CD4-positive, alpha-beta memory T cell (primary cell): ENCODE measurements at regions of chr12 and their contacts with region 1.

Region 1: DNA sequence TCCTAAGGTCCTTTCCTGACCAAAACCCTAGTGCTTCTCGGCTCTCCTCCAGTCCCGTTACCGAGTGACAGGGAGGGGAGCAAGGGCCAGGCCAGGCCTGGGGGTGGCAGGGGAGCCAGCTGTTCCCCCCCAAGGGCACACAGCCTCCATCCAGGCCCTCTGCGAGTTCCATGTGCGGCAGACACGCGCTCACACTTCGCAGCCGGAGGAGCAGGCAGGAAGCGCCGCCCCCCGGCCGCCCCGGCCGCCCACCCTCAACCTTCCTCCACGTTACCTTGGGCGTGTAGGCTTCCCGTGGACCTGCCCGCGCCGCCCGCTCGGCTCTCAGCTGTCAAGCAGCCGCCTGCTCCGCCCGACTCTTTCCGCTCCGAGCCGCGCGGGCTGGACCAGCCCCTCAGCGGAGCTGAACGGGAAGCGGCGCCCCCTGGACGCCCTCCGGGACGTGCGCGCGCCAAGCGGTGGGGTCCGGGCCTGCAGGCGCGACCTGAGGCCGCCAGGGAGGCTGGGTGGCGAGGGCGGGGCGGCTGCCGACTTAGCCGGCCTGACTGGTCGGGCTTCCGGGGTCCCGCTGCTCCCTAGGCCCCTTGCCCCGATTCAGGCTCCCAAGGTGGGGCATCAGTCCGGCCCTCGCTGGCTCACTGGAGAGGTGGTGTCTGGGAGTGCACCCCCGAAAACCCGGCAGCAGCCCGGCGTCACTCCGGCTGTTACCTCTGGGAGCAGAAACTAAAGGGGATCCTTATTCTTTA is at the start of gene CRACR2A:
- DNase-seq: peak; percentile 79 to 85 (median 83)
- H3K4me3 ChIP-seq: peak within 1 kb of the TSS; percentile 82 to 89
- H3K4me3 Mint-ChIP-seq: peak within 1 kb of the TSS; percentile 87 to 95 (median 92)
- H3K27ac ChIP-seq: peak within 1 kb of the TSS; percentile 89
- H3K27ac Mint-ChIP-seq: peak within 1 kb of the TSS; percentile 94 to 99 (median 98)
- H3K4me1 ChIP-seq: peaks cover 61% of the 10 kb centered on the region
- H3K4me1 Mint-ChIP-seq: peaks cover 56 to 66% (median 60%) of the 10 kb centered on the region in 4 donors
- H3K27me3 ChIP-seq: no peaks in the 10 kb centered on the region
- H3K27me3 Mint-ChIP-seq: no peaks in the 10 kb centered on the region
- total RNA-seq, gene CRACR2A: 34.4 to 37.6 TPM

Region 2: GRCh38 chr12:3030821-3031429 is 722.0 kb before region 1 on chr12:
- CTCF ChIA-PET with region 1: no interaction called
- POLR2A ChIA-PET with region 1: no interaction called
- intact Hi-C with region 1: no loop called
- DNase-seq: no peak
- H3K4me3 ChIP-seq: no peak overlapping the region
- H3K4me3 Mint-ChIP-seq: no peak overlapping the region
- H3K27ac ChIP-seq: no peak overlapping the region
- H3K27ac Mint-ChIP-seq: no peak overlapping the region
- H3K4me1 ChIP-seq: no peaks in the 10 kb centered on the region
- H3K4me1 Mint-ChIP-seq: no peaks in the 10 kb centered on the region
- H3K27me3 ChIP-seq: no peaks in the 10 kb centered on the region
- H3K27me3 Mint-ChIP-seq: peaks cover 3% of the 10 kb centered on the region in 2 donors

Region 3: DNA sequence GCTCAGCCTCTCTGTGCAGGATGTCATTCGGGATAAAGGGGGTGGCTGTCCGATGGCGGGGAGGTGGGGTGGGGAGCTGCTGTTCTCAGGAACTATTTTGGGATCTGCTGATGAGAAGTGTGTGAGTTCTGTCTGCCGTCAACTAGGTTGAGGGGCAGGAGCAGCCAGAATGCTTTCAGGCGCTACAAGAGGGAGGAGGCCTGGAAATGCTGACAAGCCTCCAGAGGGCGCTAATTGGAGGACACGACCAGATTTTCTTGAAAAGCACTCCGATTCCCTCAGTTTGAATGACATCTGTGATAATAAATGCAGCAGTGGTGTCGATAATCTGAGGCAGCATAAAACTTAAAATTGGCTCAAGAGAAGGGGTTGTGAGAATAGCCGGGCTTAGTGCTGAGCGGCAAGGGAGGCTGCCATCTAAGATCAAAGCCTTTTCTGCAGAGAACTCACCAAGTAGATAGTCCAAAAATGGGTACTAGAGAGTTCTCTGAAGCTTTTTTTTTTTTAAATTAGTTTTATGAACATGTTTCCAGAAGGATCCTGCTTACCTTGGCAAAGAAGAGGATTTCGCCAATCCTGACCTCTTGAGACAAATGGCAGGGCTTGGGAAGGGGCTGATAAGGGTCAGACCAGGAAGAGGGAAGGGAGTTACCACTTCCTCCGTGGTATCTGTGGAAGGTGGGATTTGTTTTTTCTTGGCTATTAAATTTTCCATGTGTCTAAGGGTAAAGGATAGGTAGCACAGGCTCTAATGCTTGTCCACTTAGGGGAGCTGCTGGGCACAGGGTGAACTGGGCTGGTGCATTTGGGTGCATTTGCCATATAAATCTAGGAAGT is 94.4 kb before region 1 on chr12:
- CTCF ChIA-PET with region 1: interaction called, 7 read pairs
- POLR2A ChIA-PET with region 1: interaction called, 3 read pairs
- intact Hi-C with region 1: loop called (anchors 2 kb)
- DNase-seq: peak in 4 of 5 donors; percentile 22 to 38 (median 27)
- H3K4me3 ChIP-seq: no peak overlapping the region
- H3K4me3 Mint-ChIP-seq: no peak overlapping the region
- H3K27ac ChIP-seq: no peak overlapping the region
- H3K27ac Mint-ChIP-seq: peak overlapping the region in 1 of 7 donors; percentile 36
- H3K4me1 ChIP-seq: no peaks in the 10 kb centered on the region
- H3K4me1 Mint-ChIP-seq: no peaks in the 10 kb centered on the region
- H3K27me3 ChIP-seq: no peaks in the 10 kb centered on the region
- H3K27me3 Mint-ChIP-seq: no peaks in the 10 kb centered on the region

Region 4: GRCh38 chr12:3677609-3678008 is 75.3 kb before region 1 on chr12:
- CTCF ChIA-PET with region 1: no interaction called
- POLR2A ChIA-PET with region 1: no interaction called
- intact Hi-C with region 1: loop called (anchors 5 kb)
- DNase-seq: no peak
- H3K4me3 ChIP-seq: no peak overlapping the region
- H3K4me3 Mint-ChIP-seq: no peak overlapping the region
- H3K27ac ChIP-seq: no peak overlapping the region
- H3K27ac Mint-ChIP-seq: peak overlapping the region in 2 of 7 donors; percentile 4 to 75
- H3K4me1 ChIP-seq: no peaks in the 10 kb centered on the region
- H3K4me1 Mint-ChIP-seq: peaks cover 0 to 5% (median 0%) of the 10 kb centered on the region in 4 donors
- H3K27me3 ChIP-seq: no peaks in the 10 kb centered on the region
- H3K27me3 Mint-ChIP-seq: no peaks in the 10 kb centered on the region

Region 5: DNA sequence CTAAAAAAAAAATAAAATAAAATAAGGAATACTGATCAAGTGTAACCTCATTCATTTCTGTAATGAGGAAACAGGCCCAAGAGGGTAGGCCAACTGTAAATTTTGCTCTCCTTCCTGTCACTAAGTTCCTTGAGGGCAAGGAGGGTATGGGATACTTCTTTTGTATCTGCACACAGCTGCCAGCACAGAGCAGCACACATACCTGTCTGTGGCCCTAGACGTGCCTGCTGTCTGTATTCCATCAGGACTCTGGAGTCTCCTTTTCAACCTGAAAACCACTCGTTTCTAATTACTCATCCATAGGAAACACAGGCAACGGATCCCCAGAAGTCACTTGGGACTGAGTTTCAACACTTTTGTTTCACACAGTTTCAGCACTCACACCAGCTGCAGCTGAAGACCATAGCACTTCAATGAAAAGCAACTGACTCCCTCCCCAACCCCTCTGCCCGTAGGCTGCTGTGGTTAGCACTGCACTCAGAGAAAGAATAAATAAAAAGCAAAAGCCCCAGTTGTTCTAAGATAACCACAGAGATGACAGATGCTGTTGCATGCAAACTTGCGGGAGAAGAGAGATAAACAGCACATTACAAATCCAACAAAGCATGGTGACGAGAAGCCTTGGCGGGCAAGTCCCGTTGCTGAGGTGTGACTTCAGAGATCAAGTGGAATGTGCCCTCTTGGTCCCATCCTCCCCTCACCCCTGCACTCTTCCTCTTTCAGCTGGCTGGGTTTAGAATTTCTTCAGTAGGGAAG is 24.9 kb before region 1 on chr12:
- CTCF ChIA-PET with region 1: interaction called, 3 read pairs
- POLR2A ChIA-PET with region 1: interaction called, 5 read pairs
- intact Hi-C with region 1: loop called (anchors 2 kb)
- DNase-seq: peak; percentile 45 to 82 (median 64)
- H3K4me3 ChIP-seq: no peak overlapping the region
- H3K4me3 Mint-ChIP-seq: peak overlapping the region in 6 of 8 donors; percentile 22 to 70 (median 56)
- H3K27ac ChIP-seq: peak overlapping the region; percentile 43
- H3K27ac Mint-ChIP-seq: peak overlapping the region; percentile 83 to 94 (median 90)
- H3K4me1 ChIP-seq: peaks cover 30% of the 10 kb centered on the region
- H3K4me1 Mint-ChIP-seq: peaks cover 30 to 52% (median 44%) of the 10 kb centered on the region in 4 donors
- H3K27me3 ChIP-seq: no peaks in the 10 kb centered on the region
- H3K27me3 Mint-ChIP-seq: no peaks in the 10 kb centered on the region

Region 6: GRCh38 chr12:3872800-3873636 is 120.1 kb after region 1 on chr12 and contains the start of gene PARP11:
- CTCF ChIA-PET with region 1: no interaction called
- POLR2A ChIA-PET with region 1: interaction called, 5 read pairs
- intact Hi-C with region 1: loop called (anchors 2 kb)
- DNase-seq: peak; percentile 97 to 98 (median 97)
- H3K4me3 ChIP-seq: peak within 1 kb of the TSS; percentile 53 to 87
- H3K4me3 Mint-ChIP-seq: peak within 1 kb of the TSS; percentile 95 to 99 (median 98)
- H3K27ac ChIP-seq: peak within 1 kb of the TSS; percentile 95
- H3K27ac Mint-ChIP-seq: peak within 1 kb of the TSS; percentile 95 to 100 (median 99)
- H3K4me1 ChIP-seq: peaks cover 50% of the 10 kb centered on the region
- H3K4me1 Mint-ChIP-seq: peaks cover 34 to 57% (median 40%) of the 10 kb centered on the region in 4 donors
- H3K27me3 ChIP-seq: no peaks in the 10 kb centered on the region
- H3K27me3 Mint-ChIP-seq: no peaks in the 10 kb centered on the region
- total RNA-seq, gene PARP11: 36.4 to 39.9 TPM